ENCODE measurements at regions of chr5 and their contacts with region 1.

Region 1: DNA sequence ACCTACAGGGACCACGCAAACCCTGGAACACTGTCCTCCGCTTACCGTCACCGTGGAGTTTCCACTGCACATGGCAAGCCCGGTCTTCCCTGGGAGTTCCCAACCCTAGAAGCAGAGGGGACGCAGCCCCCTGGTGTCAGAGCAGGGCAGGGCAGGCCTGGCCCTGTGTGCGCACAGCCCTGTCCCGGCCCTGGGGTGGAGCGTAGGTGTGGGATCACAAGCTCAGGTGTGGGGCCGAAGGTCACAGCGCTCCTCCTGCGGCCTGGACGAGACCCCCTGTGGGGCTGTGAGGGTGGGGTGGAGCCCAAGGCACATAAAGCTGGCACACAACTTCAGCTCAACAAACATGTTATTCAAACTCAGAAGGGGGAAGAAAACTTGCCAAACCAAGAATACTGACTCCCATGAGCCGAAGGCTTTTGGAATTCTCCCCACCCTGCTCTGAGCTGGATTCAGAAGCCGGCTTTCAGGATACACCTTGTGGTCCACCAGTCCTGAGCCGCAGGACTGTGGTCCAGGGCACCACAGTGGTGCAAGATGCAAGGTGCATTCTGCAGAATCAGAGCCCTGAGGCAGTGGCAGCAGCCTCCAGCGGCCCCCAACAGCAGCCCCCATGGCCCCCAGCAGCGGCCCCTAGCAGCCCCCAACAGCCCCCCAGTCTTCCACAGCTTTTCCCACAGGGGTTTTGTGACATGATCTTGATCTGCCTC is 11.8 kb upstream of the EXOC3 start:
- DNase-seq: no peak
- ATAC-seq: peak; percentile 96
- H3K4me3 ChIP-seq: no peak overlapping the region
- H3K27ac ChIP-seq: no peak overlapping the region
- H3K4me1 ChIP-seq: peaks cover 8% of the 10 kb centered on the region
- H3K27me3 ChIP-seq: no peaks in the 10 kb centered on the region
- CTCF ChIP-seq: peak; percentile 75 to 89 (median 89)
- EP300 ChIP-seq: no peak
- POLR2A ChIP-seq: peak; percentile 57; the same call in 1 of the 2 replicates
- RAD21 ChIP-seq: peak; percentile 88

Region 2: DNA sequence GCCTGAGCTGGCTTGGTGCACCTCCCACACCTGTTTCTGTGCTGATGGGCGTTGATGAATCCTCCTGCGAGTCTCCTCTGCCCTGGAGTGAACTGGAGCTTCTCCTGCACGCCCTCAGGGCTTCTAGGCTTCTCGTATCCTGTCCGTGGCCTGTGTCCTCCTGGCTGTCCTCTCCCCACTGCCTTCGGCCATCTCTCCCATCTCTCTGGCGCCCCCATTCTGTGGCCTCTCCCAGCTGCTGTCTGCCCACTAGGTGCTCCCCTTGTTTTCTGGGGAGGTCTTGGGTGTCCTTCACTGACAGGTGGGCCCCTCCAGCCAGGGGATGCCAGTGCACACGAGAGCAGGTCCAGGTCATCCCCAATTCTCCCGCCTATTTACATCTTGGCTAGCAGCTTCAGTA is 80.8 kb before region 1 on chr5:
- CTCF ChIA-PET with region 1: interaction called, 11 read pairs
- POLR2A ChIA-PET with region 1: no interaction called
- RAD21 ChIA-PET with region 1: interaction called, 3 read pairs
- SMC1A ChIA-PET with region 1: no interaction called
- in situ Hi-C with region 1: no loop called
- intact Hi-C with region 1: no loop called
- DNase-seq: no peak
- ATAC-seq: no peak; the same call in 2 of the 3 replicates
- H3K4me3 ChIP-seq: no peak overlapping the region
- H3K27ac ChIP-seq: no peak overlapping the region
- H3K4me1 ChIP-seq: peaks cover 17% of the 10 kb centered on the region
- H3K27me3 ChIP-seq: no peaks in the 10 kb centered on the region
- CTCF ChIP-seq: peak in 2 of 3 experiments; percentile 8 to 14; a peak in 1 of 6 replicates
- EP300 ChIP-seq: no peak
- POLR2A ChIP-seq: no peak
- RAD21 ChIP-seq: no peak

Region 3: GRCh38 chr5:411728-412127 is 19.4 kb before region 1 on chr5:
- CTCF ChIA-PET with region 1: interaction called, 10 read pairs
- POLR2A ChIA-PET with region 1: no interaction called
- RAD21 ChIA-PET with region 1: interaction called, 3 read pairs
- SMC1A ChIA-PET with region 1: no interaction called
- in situ Hi-C with region 1: no loop called
- intact Hi-C with region 1: no loop called
- DNase-seq: no peak
- ATAC-seq: no peak
- H3K4me3 ChIP-seq: no peak overlapping the region
- H3K27ac ChIP-seq: no peak overlapping the region
- H3K4me1 ChIP-seq: no peaks in the 10 kb centered on the region
- H3K27me3 ChIP-seq: no peaks in the 10 kb centered on the region
- CTCF ChIP-seq: no peak
- EP300 ChIP-seq: no peak
- POLR2A ChIP-seq: no peak
- RAD21 ChIP-seq: no peak